ENCODE measurements at regions of chr12 and their contacts with region 1.

Region 1: DNA sequence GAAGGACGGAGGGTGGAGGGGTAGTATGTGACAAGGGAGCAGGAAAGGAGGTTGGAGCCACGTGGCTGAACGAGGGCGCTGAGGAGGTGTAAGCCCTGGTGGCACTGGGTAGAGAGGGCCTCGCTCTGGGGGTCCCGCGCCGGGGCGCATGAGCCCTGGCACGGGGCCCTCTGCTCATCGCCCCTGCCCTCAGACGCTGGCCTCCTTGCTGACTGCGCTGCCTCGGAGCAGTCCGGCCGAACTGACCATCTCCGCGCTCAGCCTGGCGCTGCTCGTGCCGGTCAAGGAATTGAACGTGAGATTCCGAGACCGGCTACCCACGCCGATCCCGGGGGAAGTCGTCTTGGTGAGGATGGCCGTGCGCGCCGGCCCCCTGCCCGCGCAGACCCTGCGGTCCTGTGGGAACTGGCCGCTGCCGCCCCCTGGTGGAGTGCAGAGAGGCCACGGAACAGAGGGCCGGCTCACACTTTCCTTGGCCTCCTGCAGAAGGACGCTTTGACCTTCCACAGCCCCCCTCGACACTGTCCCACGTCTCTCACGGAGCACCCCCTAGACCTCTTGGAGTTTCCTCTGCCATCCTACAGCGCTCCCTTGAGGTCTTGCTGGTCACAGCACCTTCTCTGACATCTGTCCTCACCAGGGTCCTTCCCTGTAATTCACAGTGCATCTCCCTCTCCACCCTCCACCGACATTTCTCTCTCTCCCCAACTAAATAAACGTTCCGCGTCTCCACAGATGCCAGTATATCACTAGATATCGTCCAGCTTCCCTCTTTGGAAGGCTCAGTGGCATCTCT is 10.5 kb downstream of the ARHGEF25 start:
- DNase-seq: peak in 3 of 4 donors; percentile 59 to 91 (median 74)
- ATAC-seq: peak; percentile 87
- H3K4me3 ChIP-seq: peak overlapping the region; percentile 25 to 33
- H3K27ac ChIP-seq: no peak overlapping the region
- H3K4me1 ChIP-seq: peaks cover 7 to 29% of the 10 kb centered on the region in 2 donors
- H3K27me3 ChIP-seq: peaks cover 54 to 100% of the 10 kb centered on the region in 2 donors
- CTCF ChIP-seq: peak; percentile 83 to 91

Region 2: GRCh38 chr12:57469296-57470164 is 152.2 kb before region 1 on chr12:
- intact Hi-C with region 1: no loop called
- DNase-seq: no peak
- ATAC-seq: no peak
- H3K4me3 ChIP-seq: no peak overlapping the region
- H3K27ac ChIP-seq: peak overlapping the region in 1 of 2 donors; percentile 51
- H3K4me1 ChIP-seq: peaks cover 0 to 27% of the 10 kb centered on the region in 2 donors
- H3K27me3 ChIP-seq: peaks cover 4 to 43% of the 10 kb centered on the region in 2 donors
- CTCF ChIP-seq: no peak

Region 3: GRCh38 chr12:57583008-57583831 is 38.5 kb before region 1 on chr12:
- intact Hi-C with region 1: loop called in 1 of 2 experiments (anchors 2 kb)
- DNase-seq: peak in 3 of 4 donors; percentile 44 to 85 (median 62)
- ATAC-seq: peak; percentile 99
- H3K4me3 ChIP-seq: no peak overlapping the region
- H3K27ac ChIP-seq: no peak overlapping the region
- H3K4me1 ChIP-seq: peaks cover 0 to 6% of the 10 kb centered on the region in 2 donors
- H3K27me3 ChIP-seq: peaks cover 0 to 43% of the 10 kb centered on the region in 2 donors
- CTCF ChIP-seq: peak; percentile 94 to 98

Measured in left lung (tissue), 14 donors.